ENCODE measurements at regions of chr9 and their contacts with region 1.

Region 1: GRCh38 chr9:137034863-137035761 is 3.2 kb upstream of the FUT7 start:
- DNase-seq: peak; percentile 77 to 93 (median 90)
- ATAC-seq: peak; percentile 63 to 76
- H3K4me3 ChIP-seq: no peak overlapping the region
- H3K27ac ChIP-seq: no peak overlapping the region
- H3K4me1 ChIP-seq: no peaks in the 10 kb centered on the region
- H3K27me3 ChIP-seq: no peaks in the 10 kb centered on the region

Region 2: DNA sequence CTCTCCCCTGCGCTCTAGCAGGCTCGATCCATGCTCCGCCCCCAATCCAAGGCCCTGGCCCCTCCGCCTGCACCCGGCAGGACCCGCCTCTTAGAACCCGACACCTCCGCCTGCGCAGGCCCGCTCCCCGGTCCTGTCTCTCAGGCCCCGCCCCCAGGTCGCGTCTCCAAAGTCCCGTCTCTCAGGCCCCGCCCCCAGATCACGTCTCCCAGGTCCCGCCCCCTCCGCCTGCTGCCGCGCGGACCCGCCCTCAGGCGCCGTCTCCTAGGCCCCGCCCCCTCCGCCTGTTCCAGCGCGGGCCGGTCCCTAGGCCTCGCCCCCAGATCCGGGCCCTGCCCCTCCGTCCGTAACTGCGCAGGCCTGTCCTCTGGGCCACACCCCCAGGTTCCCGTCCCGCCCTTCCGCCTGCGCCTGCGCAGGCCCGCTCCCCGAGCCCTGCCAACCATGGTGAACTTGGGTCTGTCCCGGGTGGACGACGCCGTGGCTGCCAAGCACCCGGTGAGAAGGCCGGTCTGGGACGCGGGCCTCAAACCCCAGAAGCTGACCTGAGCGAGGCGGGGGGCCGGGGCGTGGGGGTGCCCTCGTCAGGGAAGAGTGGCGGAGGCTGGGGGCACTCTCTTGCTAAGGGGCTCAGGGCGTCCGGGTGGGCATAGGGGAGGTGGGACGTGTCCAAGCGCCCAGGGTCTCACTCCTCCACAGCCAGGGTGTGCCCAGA is 244.0 kb before region 1 on chr9 and contains the start of gene TMEM141:
- intact Hi-C with region 1: loop called (anchors 2 to 5 kb)
- DNase-seq: peak; percentile 100
- ATAC-seq: peak; percentile 96 to 97
- H3K4me3 ChIP-seq: peak within 1 kb of the TSS; percentile 55
- H3K27ac ChIP-seq: peak within 1 kb of the TSS; percentile 85
- H3K4me1 ChIP-seq: peaks cover 3% of the 10 kb centered on the region
- H3K27me3 ChIP-seq: no peaks in the 10 kb centered on the region
- total RNA-seq, gene TMEM141: 73.6 to 115 (median 100) TPM

Region 3: GRCh38 chr9:136899196-136899595 is 135.9 kb before region 1 on chr9:
- intact Hi-C with region 1: no loop called
- DNase-seq: no peak
- ATAC-seq: no peak
- H3K4me3 ChIP-seq: no peak overlapping the region
- H3K27ac ChIP-seq: no peak overlapping the region
- H3K4me1 ChIP-seq: peaks cover 16% of the 10 kb centered on the region
- H3K27me3 ChIP-seq: no peaks in the 10 kb centered on the region

Region 4: DNA sequence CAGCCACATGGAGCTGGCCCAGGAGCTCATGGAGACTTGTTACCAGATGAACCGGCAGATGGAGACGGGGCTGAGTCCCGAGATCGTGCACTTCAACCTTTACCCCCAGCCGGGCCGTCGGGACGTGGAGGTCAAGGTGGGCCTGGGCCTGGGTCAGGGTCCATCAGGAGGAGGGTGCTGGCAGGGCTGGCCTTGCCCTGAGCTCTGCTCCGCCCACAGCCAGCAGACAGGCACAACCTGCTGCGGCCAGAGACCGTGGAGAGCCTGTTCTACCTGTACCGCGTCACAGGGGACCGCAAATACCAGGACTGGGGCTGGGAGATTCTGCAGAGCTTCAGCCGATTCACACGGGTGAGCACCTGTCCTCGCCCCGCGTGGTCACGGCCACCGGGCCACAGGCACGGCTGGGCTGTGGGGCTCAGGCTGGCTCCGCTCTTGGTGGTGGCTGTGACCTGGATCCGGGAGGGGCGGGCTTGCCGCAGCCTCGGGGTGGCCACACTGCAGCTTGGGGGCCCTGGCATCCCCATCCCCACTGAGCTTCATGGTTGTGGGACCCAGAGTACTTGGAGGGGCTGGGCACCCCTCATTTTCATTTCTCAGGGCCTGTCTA is 72.3 kb after region 1 on chr9:
- intact Hi-C with region 1: no loop called
- DNase-seq: peak in 2 of 3 donors; percentile 37 to 54
- ATAC-seq: no peak
- H3K4me3 ChIP-seq: no peak overlapping the region
- H3K27ac ChIP-seq: no peak overlapping the region
- H3K4me1 ChIP-seq: no peaks in the 10 kb centered on the region
- H3K27me3 ChIP-seq: no peaks in the 10 kb centered on the region